H1 (cell line): ENCODE measurements at regions of chr15 and their contacts with region 1.

Region 1: GRCh38 chr15:65530314-65531122 is at the start of gene HACD3:
- DNase-seq: peak; percentile 44 to 96
- H3K4me3 ChIP-seq: peak within 1 kb of the TSS; percentile 75 to 92 (median 89)
- H3K27ac ChIP-seq: peak within 1 kb of the TSS; percentile 96
- H3K4me1 ChIP-seq: peaks cover 4 to 14% (median 8%) of the 10 kb centered on the region in 4 experiments
- H3K27me3 ChIP-seq: no peaks in the 10 kb centered on the region
- CTCF ChIP-seq: no peak
- EP300 ChIP-seq: no peak
- POLR2A ChIP-seq: peak; percentile 64 to 79
- RAD21 ChIP-seq: no peak
- total RNA-seq, gene HACD3: 118 and 120 TPM in 2 replicates

Region 2: GRCh38 chr15:65392368-65392767 is 138.2 kb before region 1 on chr15:
- CTCF ChIA-PET with region 1: no interaction called
- POLR2A ChIA-PET with region 1: no interaction called
- DNase-seq: no peak
- H3K4me3 ChIP-seq: no peak overlapping the region
- H3K27ac ChIP-seq: no peak overlapping the region
- H3K4me1 ChIP-seq: peaks cover 0 to 12% (median 4%) of the 10 kb centered on the region in 4 experiments; a peak in 6 of 7 replicates
- H3K27me3 ChIP-seq: peaks cover 14 to 31% (median 29%) of the 10 kb centered on the region in 4 experiments; a peak in 6 of 7 replicates
- CTCF ChIP-seq: no peak
- EP300 ChIP-seq: no peak
- POLR2A ChIP-seq: no peak
- RAD21 ChIP-seq: no peak

Region 3: DNA sequence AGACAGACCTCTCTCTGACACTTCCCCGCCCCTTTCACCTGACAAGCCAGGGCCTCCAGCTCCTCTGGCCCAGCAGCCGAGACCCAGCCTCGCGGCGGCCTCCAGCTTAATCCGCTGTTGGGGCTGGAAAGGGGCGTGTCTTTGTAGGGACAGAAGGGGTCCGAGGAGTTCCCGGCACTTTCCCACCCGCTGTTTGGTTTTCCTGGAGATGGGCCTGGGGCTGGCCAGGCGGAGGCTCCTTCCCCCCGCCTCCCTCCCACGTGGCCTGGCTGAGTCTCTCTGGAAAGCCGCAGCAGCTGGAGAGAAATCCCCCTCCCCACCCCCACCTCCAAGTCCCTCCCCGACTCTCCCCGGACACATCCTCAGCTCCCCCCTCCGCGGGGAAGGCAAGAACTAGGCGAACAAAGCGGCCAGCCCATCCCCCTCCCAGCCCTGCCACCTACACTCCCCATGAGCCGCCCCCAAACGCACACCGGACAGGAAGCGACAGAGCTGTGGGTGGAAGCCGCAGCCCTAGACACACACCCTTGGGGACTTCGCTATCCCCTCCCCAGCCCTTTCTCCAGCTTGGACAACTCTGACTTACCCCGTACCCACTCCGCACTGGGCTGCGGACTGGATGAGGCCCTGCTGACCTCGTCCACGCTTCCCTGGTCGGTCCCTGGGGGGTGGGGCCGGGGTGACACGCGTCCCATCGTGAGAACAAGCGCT is 109.0 kb before region 1 on chr15:
- CTCF ChIA-PET with region 1: no interaction called
- POLR2A ChIA-PET with region 1: interaction called, 12 read pairs
- DNase-seq: peak in 1 of 2 experiments; percentile 90
- H3K4me3 ChIP-seq: peak overlapping the region; percentile 82 to 91 (median 86)
- H3K27ac ChIP-seq: peak overlapping the region; percentile 71
- H3K4me1 ChIP-seq: peaks cover 16 to 48% (median 31%) of the 10 kb centered on the region in 4 experiments
- H3K27me3 ChIP-seq: peaks cover 0 to 16% (median 9%) of the 10 kb centered on the region in 4 experiments; a peak in 4 of 7 replicates
- CTCF ChIP-seq: no peak
- EP300 ChIP-seq: no peak; a peak in 1 of 3 replicates
- POLR2A ChIP-seq: peak in 1 of 2 experiments; percentile 51; a peak in 2 of 3 replicates
- RAD21 ChIP-seq: peak; percentile 0 to 23; a peak in 2 of 4 replicates

Region 4: DNA sequence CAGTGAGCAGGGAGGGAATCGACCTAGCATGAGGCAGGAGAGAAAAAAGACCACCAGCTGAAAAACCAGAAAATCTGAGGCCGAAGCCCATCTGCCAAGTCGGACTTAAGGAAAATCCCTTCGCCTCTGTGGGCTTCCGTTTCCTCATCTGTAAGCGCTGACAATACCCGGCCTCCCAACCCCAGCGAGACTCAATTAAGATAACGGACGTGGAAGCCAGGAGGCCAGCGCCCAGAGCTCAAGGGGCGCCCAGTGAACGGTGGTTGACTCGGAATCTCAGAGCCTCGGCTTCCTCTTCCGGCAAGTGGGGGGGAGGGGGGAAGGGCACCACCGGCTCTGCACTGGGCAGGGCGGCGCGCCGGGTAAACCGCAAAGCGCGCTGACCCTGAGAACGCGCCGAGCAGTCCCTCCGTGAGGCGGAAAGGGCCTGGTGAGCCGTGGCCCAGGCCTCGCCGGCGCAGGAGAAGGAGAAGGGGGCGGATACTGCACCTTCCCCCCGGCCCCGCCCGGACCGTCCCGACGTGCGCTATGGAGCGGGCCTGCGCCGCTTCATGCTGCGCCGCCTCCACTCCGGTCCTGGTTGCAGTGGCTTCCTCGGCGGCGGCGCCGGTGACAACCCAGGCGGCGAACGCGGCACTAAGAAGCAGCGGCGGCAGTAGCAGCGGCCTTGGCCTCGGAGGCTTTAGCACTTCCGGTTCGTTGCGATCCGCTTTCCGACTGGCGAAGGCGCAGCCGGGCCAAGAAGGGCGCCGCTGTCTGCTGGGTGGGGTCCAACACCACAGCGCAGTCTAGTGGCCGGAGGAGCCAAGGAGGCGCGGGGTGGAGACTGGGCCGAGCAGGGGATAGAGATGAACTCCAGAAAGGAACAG is 13.3 kb before region 1 on chr15 and contains the start of gene DPP8:
- CTCF ChIA-PET with region 1: interaction called, 11 read pairs
- POLR2A ChIA-PET with region 1: interaction called, 29 read pairs
- DNase-seq: peak; percentile 81 to 97
- H3K4me3 ChIP-seq: peak within 1 kb of the TSS; percentile 86 to 98 (median 92)
- H3K27ac ChIP-seq: peak within 1 kb of the TSS; percentile 85; the same call in 1 of the 2 replicates
- H3K4me1 ChIP-seq: peaks cover 1 to 3% (median 2%) of the 10 kb centered on the region in 4 experiments; a peak in 5 of 7 replicates
- H3K27me3 ChIP-seq: no peaks in the 10 kb centered on the region
- CTCF ChIP-seq: peak; percentile 94 to 97 (median 94)
- EP300 ChIP-seq: 0 out of 3 replicates have a peak, but pooled peaks of 1 of the 2 experiments have one; percentile 26
- POLR2A ChIP-seq: peak in 1 of 2 experiments; percentile 95; a peak in 2 of 3 replicates
- RAD21 ChIP-seq: peak; percentile 24 to 34; a peak in 3 of 4 replicates
- total RNA-seq, gene DPP8: 26.0 and 27.2 TPM in 2 replicates

Region 5: GRCh38 chr15:65541231-65541820 is 10.8 kb after region 1 on chr15:
- CTCF ChIA-PET with region 1: interaction called, 3 read pairs
- POLR2A ChIA-PET with region 1: interaction called, 18 read pairs
- DNase-seq: no peak
- H3K4me3 ChIP-seq: no peak overlapping the region
- H3K27ac ChIP-seq: no peak overlapping the region
- H3K4me1 ChIP-seq: no peaks in the 10 kb centered on the region
- H3K27me3 ChIP-seq: no peaks in the 10 kb centered on the region
- CTCF ChIP-seq: no peak
- EP300 ChIP-seq: no peak
- POLR2A ChIP-seq: no peak
- RAD21 ChIP-seq: no peak